Dorsolateral prefrontal cortex (tissue), 120 donors: ENCODE measurements at regions of chr16 and their contacts with region 1.

Region 1: GRCh38 chr16:56519459-56520250 is at the start of gene BBS2:
- DNase-seq: peak; percentile 80 to 94 (median 88)
- H3K4me3 ChIP-seq: peak within 1 kb of the TSS; percentile 58 to 100 (median 97)
- H3K27ac ChIP-seq: peak within 1 kb of the TSS; percentile 89 to 100 (median 99)
- H3K27me3 ChIP-seq: no peaks in the 10 kb centered on the region
- CTCF ChIP-seq: peak in 34 of 56 donors; percentile 5 to 58 (median 28)
- total RNA-seq, gene BBS2: 104 to 260 (median 168) TPM

Region 2: DNA sequence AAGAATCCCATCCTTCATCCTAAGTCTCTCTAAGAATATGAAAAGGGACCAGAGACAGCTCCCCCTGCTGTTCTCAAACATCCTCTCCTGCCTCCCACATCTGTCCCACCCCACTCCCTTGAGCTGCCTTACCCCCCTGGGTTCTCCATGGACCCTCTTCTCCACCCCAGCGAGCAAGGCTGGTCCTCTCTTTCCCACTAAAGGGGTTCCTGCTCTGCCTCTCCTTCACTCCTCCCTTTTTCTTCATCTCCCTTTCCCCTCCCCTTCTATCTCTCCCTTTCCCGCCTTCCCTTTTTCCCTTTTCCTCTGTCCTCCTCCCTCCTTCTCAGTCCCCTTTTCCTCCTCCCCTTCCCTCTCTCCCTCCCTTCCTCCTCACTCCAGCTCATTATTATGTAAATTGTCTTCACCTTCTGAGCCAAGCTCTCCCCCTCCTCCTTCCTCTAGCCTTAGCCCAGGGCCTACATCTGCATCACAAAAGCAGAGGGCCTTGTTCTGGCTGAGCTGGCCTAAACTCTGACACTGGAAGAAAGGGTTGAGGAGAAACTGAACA is 238.3 kb before region 1 on chr16:
- intact Hi-C with region 1: no loop called
- DNase-seq: peak in 3 of 10 donors; percentile 30 to 38 (median 32)
- H3K4me3 ChIP-seq: no peak overlapping the region
- H3K27ac ChIP-seq: peak overlapping the region in 57 of 59 donors; percentile 36 to 100 (median 86)
- H3K27me3 ChIP-seq: no peaks in the 10 kb centered on the region
- CTCF ChIP-seq: peak in 34 of 56 donors; percentile 11 to 51 (median 30)

Region 3: GRCh38 chr16:56547120-56547948 is 27.7 kb after region 1 on chr16:
- intact Hi-C with region 1: loop called (anchors 1 to 2 kb)
- DNase-seq: peak; percentile 14 to 86 (median 74)
- H3K4me3 ChIP-seq: peak overlapping the region in 34 of 59 donors; percentile 3 to 46 (median 23)
- H3K27ac ChIP-seq: peak overlapping the region; percentile 85 to 100 (median 98)
- H3K27me3 ChIP-seq: no peaks in the 10 kb centered on the region
- CTCF ChIP-seq: peak in 3 of 56 donors; percentile 9 to 31 (median 17)

Region 4: DNA sequence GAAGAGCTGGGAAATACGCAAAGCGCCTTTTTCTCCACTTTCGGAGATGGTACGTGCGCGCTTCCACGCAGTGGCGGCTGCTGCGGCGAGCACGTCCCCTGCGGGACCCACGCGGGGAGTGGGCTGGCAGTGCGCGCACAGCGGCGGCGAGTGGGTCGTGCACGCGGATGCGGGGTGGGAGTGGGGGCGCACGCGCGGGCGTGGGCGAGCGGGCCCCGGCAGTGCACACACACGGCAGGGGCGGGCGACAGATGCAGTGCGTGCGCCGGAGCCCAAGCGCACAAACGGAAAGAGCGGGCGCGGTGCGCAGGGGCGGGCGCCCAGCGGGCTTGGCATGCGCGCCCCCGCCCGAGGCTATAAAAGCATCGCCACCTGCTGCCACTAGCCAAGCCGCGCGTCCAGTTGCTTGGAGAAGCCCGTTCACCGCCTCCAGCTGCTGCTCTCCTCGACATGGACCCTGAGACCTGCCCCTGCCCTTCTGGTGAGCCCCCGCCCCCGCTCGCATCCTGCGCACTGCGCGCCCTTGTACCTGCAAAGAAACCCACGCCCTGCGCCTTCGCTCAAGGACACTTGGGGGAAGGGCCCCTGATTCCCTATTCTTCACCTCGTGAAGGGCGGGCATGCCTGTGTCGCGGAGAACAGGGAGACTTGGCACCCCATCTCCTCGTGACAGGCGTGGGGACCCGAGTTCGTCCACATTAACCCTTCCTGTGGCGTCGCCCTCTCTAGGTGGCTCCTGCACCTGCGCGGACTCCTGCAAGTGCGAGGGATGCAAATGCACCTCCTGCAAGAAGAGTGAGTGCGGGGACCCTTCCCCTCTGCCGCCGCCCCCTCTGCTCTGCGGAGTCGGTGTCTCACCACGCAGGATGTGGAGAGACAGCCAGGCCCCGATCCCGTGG is 69.7 kb after region 1 on chr16 and contains the start of gene MT3:
- intact Hi-C with region 1: loop called in 1 of 2 experiments (anchors 2 kb)
- DNase-seq: peak; percentile 84 to 93 (median 88)
- H3K4me3 ChIP-seq: peak within 1 kb of the TSS; percentile 51 to 94 (median 79)
- H3K27ac ChIP-seq: peak within 1 kb of the TSS; percentile 61 to 99 (median 95)
- H3K27me3 ChIP-seq: no peaks in the 10 kb centered on the region
- CTCF ChIP-seq: peak in 43 of 56 donors; percentile 6 to 61 (median 33)
- total RNA-seq, gene MT3: 739 to 2,436 (median 1,144) TPM

Region 5: GRCh38 chr16:56681939-56682702 is 162.5 kb after region 1 on chr16 and contains the start of gene MT1X:
- intact Hi-C with region 1: loop called in 1 of 2 experiments (anchors 10 kb)
- DNase-seq: peak; percentile 72 to 97 (median 90)
- H3K4me3 ChIP-seq: peak within 1 kb of the TSS; percentile 39 to 78 (median 66)
- H3K27ac ChIP-seq: peak within 1 kb of the TSS in 58 of 59 donors; percentile 23 to 93 (median 81)
- H3K27me3 ChIP-seq: no peaks in the 10 kb centered on the region
- CTCF ChIP-seq: peak in 17 of 56 donors; percentile 8 to 44 (median 17)
- total RNA-seq, gene MT1X: 69.5 to 909 (median 191) TPM

Region 6: DNA sequence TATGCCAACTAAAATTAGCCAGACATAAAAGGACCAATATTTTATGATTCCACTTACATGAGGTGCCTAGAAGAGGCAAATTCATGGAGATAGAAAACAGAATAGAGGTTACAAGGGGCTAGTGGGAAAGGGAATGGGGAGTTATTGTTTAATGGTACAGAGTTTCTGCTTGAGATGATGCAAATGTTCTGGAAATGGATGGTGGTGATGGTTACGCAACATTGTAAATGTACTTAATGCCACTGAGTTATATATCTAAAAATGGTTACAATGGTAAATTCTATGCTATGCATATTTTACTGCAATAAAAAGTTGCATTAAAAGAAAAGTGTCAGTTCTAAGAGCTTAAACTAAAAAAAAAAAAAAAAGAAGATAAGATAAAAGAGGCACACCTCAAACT is 180.5 kb after region 1 on chr16:
- intact Hi-C with region 1: loop called in 1 of 2 experiments (anchors 5 kb)
- DNase-seq: no peak
- H3K4me3 ChIP-seq: no peak overlapping the region
- H3K27ac ChIP-seq: no peak overlapping the region
- H3K27me3 ChIP-seq: no peaks in the 10 kb centered on the region
- CTCF ChIP-seq: no peak